K562 (cell line): ENCODE measurements at regions of chr22 and their contacts with region 1.

Region 1: GRCh38 chr22:20456064-20456721 is 18.6 kb upstream of the SCARF2 start:
- DNase-seq: peak; percentile 98 to 100 (median 99)
- ATAC-seq: peak; percentile 97
- H3K4me3 ChIP-seq: no peak overlapping the region
- H3K27ac ChIP-seq: no peak overlapping the region
- H3K4me1 ChIP-seq: no peaks in the 10 kb centered on the region; a peak in 1 of 5 replicates
- H3K27me3 ChIP-seq: peaks cover 6 to 7% of the 10 kb centered on the region in 2 experiments; a peak in 4 of 5 replicates
- CTCF ChIP-seq: peak; percentile 99 to 100 (median 100)
- EP300 ChIP-seq: peak; percentile 48; the same call in 1 of the 2 replicates
- POLR2A ChIP-seq: no peak
- RAD21 ChIP-seq: peak; percentile 100

Region 2: DNA sequence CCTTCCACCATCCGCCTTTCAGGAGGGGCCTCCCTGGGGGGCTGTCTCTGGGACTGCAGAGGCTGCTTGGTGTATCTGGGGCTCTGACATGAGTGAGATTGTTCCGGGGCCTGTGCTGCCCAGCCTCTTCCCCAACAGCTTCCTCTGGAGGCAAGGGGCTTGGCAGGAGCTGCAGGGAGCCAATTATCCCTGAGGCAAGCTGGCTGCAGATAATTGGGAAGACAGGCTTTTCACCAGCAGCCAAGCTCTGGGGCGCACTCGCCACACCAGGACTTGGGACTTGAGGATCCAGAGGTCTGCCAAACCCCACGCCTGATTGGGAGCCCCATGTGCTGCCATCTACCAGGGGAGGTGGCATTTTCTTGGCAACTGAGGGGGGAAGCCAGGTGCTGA is 172.5 kb before region 1 on chr22:
- CTCF ChIA-PET with region 1: interaction called, 13 read pairs
- POLR2A ChIA-PET with region 1: no interaction called
- in situ Hi-C with region 1: no loop called
- intact Hi-C with region 1: no loop called
- DNase-seq: peak in 1 of 4 experiments; percentile 27
- ATAC-seq: no peak
- H3K4me3 ChIP-seq: no peak overlapping the region
- H3K27ac ChIP-seq: no peak overlapping the region
- H3K4me1 ChIP-seq: peaks cover 0 to 25% of the 10 kb centered on the region in 2 experiments; a peak in 3 of 5 replicates
- H3K27me3 ChIP-seq: peaks cover 20 to 68% of the 10 kb centered on the region in 2 experiments; a peak in 4 of 5 replicates
- CTCF ChIP-seq: no peak
- EP300 ChIP-seq: no peak
- POLR2A ChIP-seq: no peak
- RAD21 ChIP-seq: no peak

Region 3: DNA sequence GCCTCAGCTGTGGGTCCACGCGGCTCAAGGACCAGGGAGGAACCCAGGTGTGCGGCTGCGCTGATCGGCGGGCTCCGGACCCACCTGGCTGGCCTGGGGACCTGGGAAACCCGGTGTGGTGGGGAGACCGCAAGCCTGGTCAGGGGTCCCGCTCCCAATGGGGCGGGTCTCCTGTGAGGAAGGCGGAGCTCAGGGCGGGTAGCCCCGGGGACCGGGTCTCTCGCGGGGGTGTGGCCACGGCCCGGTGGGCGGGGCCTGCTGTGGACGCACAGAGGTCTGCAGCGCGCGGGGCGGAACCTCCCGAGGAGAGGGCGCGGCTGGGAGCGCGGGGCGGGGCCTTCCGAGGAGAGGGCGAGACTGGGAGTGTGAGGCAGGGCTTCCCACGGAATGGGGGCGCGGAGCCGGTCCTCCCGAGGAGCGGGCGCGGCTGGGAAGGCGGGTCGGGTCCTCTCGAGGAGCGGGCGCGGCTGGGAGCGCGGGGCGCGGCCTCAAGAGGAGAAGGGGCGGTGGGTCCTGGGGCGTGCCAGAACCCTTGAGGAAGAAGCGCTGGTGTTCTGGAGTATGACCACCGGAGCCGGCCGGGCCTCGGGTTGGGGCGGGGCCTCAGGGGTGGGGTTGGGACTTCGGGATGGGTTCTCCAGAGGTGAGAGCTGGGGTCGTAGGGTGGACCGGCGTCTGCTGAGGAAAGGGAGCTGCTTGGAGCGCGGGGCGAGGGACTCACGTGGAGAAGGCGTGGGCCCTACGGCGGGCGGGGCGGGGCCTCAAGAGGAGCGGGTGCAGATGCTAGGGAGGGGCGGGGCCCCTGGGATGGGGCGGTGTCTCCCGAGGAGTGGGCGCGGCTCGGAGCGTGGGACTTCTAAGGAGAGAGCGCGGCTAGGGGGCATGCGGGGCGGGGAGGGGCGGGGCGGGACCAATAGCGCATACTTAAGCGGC is 157.1 kb before region 1 on chr22:
- CTCF ChIA-PET with region 1: no interaction called
- POLR2A ChIA-PET with region 1: no interaction called
- in situ Hi-C with region 1: no loop called
- intact Hi-C with region 1: loop called (anchors 5 kb)
- DNase-seq: peak; percentile 99 to 100 (median 100)
- ATAC-seq: peak; percentile 97
- H3K4me3 ChIP-seq: peak overlapping the region; percentile 55
- H3K27ac ChIP-seq: no peak overlapping the region
- H3K4me1 ChIP-seq: peaks cover 8 to 30% of the 10 kb centered on the region in 2 experiments
- H3K27me3 ChIP-seq: peaks cover 58 to 85% of the 10 kb centered on the region in 2 experiments
- CTCF ChIP-seq: peak in 1 of 3 experiments; percentile 9; a peak in 1 of 6 replicates
- EP300 ChIP-seq: no peak
- POLR2A ChIP-seq: no peak
- RAD21 ChIP-seq: no peak

Region 4: GRCh38 chr22:20430720-20431510 is 25.3 kb before region 1 on chr22:
- CTCF ChIA-PET with region 1: interaction called, 4 read pairs
- POLR2A ChIA-PET with region 1: interaction called, 46 read pairs
- in situ Hi-C with region 1: no loop called
- intact Hi-C with region 1: no loop called
- DNase-seq: peak in 3 of 4 experiments; percentile 67 to 79 (median 77)
- ATAC-seq: no peak
- H3K4me3 ChIP-seq: no peak overlapping the region
- H3K27ac ChIP-seq: no peak overlapping the region
- H3K4me1 ChIP-seq: peaks cover 12 to 44% of the 10 kb centered on the region in 2 experiments
- H3K27me3 ChIP-seq: peaks cover 39 to 80% of the 10 kb centered on the region in 2 experiments
- CTCF ChIP-seq: peak; percentile 25 to 49 (median 33); a peak in 3 of 6 replicates
- EP300 ChIP-seq: no peak
- POLR2A ChIP-seq: no peak
- RAD21 ChIP-seq: no peak

Region 5: DNA sequence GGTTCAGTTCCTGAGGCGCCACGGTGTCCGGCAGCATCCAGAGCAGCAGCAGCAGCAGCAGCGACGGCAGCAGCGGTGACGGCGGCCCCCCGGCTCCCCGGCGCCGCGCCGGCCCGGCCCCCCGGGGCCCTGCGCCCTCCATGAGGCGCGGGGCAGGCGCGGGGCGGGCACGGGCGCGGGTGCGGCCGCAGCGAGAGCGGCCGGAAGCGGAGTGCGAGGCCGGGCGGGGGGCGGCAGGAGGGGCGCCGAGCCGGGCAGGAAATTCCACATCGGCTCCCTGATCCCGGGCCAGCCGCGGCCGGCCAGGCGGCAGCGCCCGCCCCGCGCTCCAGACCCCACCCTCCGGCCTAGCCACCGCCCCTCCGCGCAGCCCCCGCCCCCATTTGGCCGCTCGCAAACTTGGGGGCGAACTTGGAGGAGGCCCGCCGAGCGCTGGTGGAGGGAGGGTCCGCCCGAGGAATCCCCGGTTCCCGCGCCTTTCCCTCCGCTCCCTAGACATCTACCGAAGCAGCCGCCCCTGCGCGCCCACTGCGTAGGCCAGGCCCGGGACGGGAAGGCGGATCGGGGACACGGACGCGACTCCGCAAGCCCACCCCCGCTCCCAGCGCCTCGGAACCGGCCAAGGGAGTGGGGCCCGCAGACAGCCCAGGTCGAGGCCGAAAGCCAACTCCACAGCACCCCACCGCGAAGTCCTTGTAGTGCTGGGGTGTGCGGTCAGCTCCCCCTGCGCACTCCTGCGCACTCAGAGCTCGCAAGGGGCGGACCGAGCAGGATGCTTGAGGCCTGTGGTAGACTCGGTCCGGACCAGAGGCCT is 18.4 kb before region 1 on chr22 and contains the start of gene SCARF2:
- CTCF ChIA-PET with region 1: interaction called, 7 read pairs
- POLR2A ChIA-PET with region 1: interaction called, 46 read pairs
- in situ Hi-C with region 1: no loop called
- intact Hi-C with region 1: no loop called
- DNase-seq: peak in 2 of 4 experiments; percentile 89
- ATAC-seq: no peak
- H3K4me3 ChIP-seq: no peak within 1 kb of the TSS
- H3K27ac ChIP-seq: no peak within 1 kb of the TSS
- H3K4me1 ChIP-seq: peaks cover 0 to 38% of the 10 kb centered on the region in 2 experiments; a peak in 2 of 5 replicates
- H3K27me3 ChIP-seq: peaks cover 51 to 96% of the 10 kb centered on the region in 2 experiments
- CTCF ChIP-seq: no peak
- EP300 ChIP-seq: no peak
- POLR2A ChIP-seq: no peak
- RAD21 ChIP-seq: no peak
- polyA plus RNA-seq, gene SCARF2: not detected

Region 6: DNA sequence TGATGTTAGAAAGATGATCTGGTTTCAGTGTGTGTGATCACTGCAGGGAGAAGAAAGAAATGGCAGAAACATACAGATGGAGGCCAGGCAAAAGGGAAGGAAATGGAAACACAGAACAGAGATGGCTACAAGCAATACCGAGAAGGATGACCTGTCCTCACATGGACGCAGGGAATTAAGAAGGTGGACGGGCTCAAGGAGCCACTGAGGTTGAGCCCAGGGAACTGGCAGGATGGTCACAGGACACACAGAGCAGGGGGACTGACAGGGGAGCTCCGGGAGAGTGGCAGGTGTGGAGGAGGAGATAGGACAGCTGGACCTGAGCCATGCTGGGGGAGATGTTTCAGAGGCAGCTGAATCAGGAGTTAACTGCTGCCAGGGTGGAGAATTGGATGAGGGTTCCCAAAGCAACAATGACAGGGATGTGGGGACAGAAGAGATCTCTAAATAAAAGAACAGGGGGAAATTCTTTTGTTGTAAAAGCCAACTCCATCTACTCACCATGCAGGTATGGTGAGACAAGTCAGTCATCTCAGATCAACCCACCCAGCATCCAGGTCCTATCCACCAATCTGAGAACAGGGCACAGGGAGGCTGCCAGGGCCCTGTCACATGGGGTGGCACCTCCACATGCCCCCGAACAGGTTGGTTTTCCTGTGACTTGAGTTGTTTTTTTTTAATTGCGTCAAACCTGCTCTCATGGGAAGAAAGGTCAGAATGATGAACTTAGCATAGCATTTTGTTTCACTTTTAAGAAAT is 13.1 kb after region 1 on chr22:
- CTCF ChIA-PET with region 1: interaction called, 3 read pairs
- POLR2A ChIA-PET with region 1: interaction called, 20 read pairs
- in situ Hi-C with region 1: no loop called
- intact Hi-C with region 1: no loop called
- DNase-seq: peak; percentile 62 to 71 (median 68)
- ATAC-seq: peak; percentile 44
- H3K4me3 ChIP-seq: no peak overlapping the region
- H3K27ac ChIP-seq: no peak overlapping the region
- H3K4me1 ChIP-seq: peaks cover 7 to 13% of the 10 kb centered on the region in 2 experiments; a peak in 4 of 5 replicates
- H3K27me3 ChIP-seq: peaks cover 14 to 18% of the 10 kb centered on the region in 2 experiments; a peak in 4 of 5 replicates
- CTCF ChIP-seq: no peak
- EP300 ChIP-seq: no peak
- POLR2A ChIP-seq: 0 out of 2 replicates have a peak, but pooled peaks have one; percentile 29
- RAD21 ChIP-seq: no peak